WTC11 (cell line): ENCODE measurements at regions of chr9 and their contacts with region 1.

Region 1: DNA sequence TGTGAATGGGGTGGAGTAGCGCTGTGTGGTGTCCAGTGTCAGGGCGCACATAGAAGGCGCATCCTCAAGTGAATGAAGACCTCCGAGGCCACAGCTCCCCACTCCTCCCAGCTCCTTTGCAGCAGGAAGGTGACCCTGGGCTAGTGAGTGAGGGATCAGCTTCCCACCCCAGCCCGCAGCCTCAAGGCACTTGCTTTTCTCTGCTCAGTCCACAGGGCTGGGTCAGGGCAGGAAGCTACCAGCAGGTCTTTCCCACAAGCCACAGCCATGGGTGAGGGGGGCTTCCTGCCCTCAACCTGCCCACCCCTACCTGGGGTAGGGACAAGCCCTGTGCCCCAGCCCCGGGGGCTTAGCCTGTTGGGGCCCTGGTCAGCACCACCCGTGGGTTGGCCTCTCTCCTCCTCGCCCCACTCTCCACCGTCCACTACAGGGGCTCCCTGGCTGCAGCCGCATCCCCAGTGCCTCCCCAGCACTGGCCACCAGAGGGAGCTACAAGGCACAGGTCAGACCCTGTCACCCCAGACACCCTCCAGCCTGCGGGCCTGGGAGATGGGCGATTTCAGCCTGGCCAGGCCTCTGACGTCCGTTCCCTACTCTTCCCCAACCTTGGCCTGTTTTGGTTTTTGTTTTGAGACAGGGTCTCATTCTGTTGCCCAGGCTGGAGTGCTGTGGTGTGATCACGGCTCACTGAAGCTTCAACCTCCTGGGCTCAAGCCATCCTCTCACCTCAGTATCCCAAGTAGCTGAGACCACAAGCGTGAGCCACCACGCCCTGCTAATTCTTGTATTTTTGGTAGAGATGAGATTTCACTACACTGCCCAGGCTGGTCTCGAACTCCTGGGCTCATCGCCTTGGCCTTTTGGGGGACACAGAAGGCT is 1.3 kb upstream of the ABCA2 start:
- DNase-seq: peak; percentile 95
- ATAC-seq: peak; percentile 74
- H3K4me3 Mint-ChIP-seq: peak overlapping the region; percentile 58
- H3K27ac Mint-ChIP-seq: no peak overlapping the region; the same call in 1 of the 2 replicates
- H3K4me1 Mint-ChIP-seq: 0 out of 2 replicates have a peak, but pooled peaks cover 2% of the 10 kb centered on the region
- H3K27me3 Mint-ChIP-seq: peaks cover 17% of the 10 kb centered on the region
- CTCF ChIP-seq: peak; percentile 84

Region 2: GRCh38 chr9:136790927-136791641 is 238.2 kb before region 1 on chr9 and contains the start of gene TMEM141:
- CTCF ChIA-PET with region 1: interaction called, 14 read pairs
- POLR2A ChIA-PET with region 1: no interaction called
- DNase-seq: peak; percentile 100
- ATAC-seq: peak; percentile 92
- H3K4me3 Mint-ChIP-seq: peak within 1 kb of the TSS; percentile 78
- H3K27ac Mint-ChIP-seq: peak within 1 kb of the TSS; percentile 88
- H3K4me1 Mint-ChIP-seq: peaks cover 20% of the 10 kb centered on the region
- H3K27me3 Mint-ChIP-seq: peaks cover 5% of the 10 kb centered on the region
- CTCF ChIP-seq: no peak
- total RNA-seq, gene TMEM141: 72.0 to 86.7 TPM (median 86.1 TPM) in 3 replicates

Region 3: GRCh38 chr9:136965771-136966484 is 63.4 kb before region 1 on chr9:
- CTCF ChIA-PET with region 1: interaction called, 19 read pairs
- POLR2A ChIA-PET with region 1: no interaction called
- DNase-seq: no peak
- ATAC-seq: no peak
- H3K4me3 Mint-ChIP-seq: no peak overlapping the region
- H3K27ac Mint-ChIP-seq: peak overlapping the region; percentile 66; the same call in 1 of the 2 replicates
- H3K4me1 Mint-ChIP-seq: peaks cover 10% of the 10 kb centered on the region
- H3K27me3 Mint-ChIP-seq: no peaks in the 10 kb centered on the region
- CTCF ChIP-seq: no peak

Region 4: DNA sequence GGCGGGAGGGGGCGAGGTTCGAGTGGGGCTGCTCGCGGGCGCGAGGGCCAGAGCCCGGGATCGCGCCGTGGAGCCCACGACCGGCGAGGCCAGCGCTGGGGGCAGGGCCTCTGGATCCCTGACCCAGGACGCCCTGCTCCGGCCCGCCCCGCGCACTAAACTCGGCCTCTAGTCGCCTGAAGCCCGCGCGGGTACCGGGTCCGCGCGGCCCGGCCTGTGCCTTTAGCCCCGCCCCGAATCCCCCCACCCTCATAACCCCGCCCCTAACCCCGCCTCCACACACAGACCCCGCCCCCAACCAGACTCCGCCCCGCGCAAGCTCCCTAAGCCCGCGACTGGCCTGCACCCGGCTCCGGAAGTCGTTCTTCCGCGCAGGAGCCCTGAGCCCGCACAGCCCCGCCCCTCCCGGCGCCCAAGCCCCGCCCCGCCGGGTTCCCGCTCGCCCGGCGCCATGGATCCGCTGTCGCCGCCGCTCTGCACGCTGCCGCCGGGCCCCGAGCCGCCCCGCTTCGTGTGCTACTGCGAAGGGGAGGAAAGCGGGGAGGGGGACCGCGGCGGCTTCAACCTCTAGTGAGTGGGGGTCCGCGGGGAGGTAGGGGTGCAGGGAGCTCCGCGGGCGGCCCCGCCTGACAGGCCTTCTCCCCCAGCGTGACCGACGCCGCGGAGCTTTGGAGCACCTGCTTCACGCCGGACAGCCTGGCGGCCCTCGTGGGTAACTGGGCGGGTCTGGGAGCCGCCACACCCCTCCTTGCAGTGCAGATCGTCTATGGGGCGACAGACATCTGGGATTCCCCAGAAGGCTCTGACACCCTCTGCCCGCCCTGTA is 37.1 kb before region 1 on chr9 and contains the start of gene PAXX:
- CTCF ChIA-PET with region 1: interaction called, 53 read pairs
- POLR2A ChIA-PET with region 1: no interaction called
- DNase-seq: peak; percentile 93
- ATAC-seq: peak; percentile 90
- H3K4me3 Mint-ChIP-seq: peak within 1 kb of the TSS; percentile 72
- H3K27ac Mint-ChIP-seq: no peak within 1 kb of the TSS
- H3K4me1 Mint-ChIP-seq: no peaks in the 10 kb centered on the region; the same call in 1 of the 2 replicates
- H3K27me3 Mint-ChIP-seq: peaks cover 34% of the 10 kb centered on the region
- CTCF ChIP-seq: no peak
- total RNA-seq, gene PAXX: 44.1 to 45.3 TPM (median 44.6 TPM) in 3 replicates

Region 5: GRCh38 chr9:137041124-137041523 is 11.8 kb after region 1 on chr9:
- CTCF ChIA-PET with region 1: interaction called, 63 read pairs
- POLR2A ChIA-PET with region 1: no interaction called
- DNase-seq: no peak
- ATAC-seq: no peak
- H3K4me3 Mint-ChIP-seq: no peak overlapping the region
- H3K27ac Mint-ChIP-seq: no peak overlapping the region
- H3K4me1 Mint-ChIP-seq: peaks cover 6% of the 10 kb centered on the region
- H3K27me3 Mint-ChIP-seq: peaks cover 9% of the 10 kb centered on the region
- CTCF ChIP-seq: no peak

Region 6: DNA sequence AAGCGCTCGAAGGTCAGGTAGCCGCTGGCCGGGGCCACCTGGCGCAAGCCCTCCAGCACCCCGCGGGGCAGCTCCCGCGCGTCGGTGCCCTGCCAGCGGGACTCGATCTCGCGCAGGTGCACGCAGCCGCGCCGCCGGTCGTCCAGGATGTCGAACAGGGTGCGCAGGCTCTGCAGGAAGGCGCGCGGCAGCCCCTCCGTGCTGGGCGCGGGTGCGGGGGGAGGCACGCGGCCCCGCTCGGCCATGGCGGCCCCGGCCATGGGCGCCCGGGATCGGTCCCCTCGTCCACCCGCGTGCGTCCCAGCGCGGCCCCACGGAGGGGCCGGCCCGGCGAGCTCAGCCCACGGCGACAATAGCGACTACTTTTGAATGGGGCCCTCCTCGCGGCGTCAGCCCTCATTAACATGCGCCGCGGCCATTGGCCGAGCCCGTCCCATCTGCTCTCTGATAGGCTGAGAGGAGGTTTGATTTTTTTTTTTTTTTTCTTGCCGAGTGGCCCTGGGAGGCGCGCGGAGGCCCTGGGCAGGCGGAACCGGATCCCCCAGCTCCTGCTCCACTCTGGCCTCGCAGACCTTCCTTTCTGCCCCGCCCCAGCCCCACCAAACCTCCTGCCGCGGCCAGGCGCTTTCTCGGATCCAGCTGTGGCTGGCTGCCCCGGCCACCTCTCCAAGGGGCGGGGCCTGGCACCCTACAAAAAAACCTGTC is 41.1 kb after region 1 on chr9 and contains the start of gene SAPCD2:
- CTCF ChIA-PET with region 1: interaction called, 91 read pairs
- POLR2A ChIA-PET with region 1: interaction called, 3 read pairs
- DNase-seq: peak; percentile 88
- ATAC-seq: peak; percentile 84
- H3K4me3 Mint-ChIP-seq: peak within 1 kb of the TSS; percentile 71
- H3K27ac Mint-ChIP-seq: peak within 1 kb of the TSS; percentile 95
- H3K4me1 Mint-ChIP-seq: peaks cover 34% of the 10 kb centered on the region
- H3K27me3 Mint-ChIP-seq: no peaks in the 10 kb centered on the region
- CTCF ChIP-seq: no peak
- total RNA-seq, gene SAPCD2: 52.0 to 67.0 TPM (median 53.6 TPM) in 3 replicates

Region 7: DNA sequence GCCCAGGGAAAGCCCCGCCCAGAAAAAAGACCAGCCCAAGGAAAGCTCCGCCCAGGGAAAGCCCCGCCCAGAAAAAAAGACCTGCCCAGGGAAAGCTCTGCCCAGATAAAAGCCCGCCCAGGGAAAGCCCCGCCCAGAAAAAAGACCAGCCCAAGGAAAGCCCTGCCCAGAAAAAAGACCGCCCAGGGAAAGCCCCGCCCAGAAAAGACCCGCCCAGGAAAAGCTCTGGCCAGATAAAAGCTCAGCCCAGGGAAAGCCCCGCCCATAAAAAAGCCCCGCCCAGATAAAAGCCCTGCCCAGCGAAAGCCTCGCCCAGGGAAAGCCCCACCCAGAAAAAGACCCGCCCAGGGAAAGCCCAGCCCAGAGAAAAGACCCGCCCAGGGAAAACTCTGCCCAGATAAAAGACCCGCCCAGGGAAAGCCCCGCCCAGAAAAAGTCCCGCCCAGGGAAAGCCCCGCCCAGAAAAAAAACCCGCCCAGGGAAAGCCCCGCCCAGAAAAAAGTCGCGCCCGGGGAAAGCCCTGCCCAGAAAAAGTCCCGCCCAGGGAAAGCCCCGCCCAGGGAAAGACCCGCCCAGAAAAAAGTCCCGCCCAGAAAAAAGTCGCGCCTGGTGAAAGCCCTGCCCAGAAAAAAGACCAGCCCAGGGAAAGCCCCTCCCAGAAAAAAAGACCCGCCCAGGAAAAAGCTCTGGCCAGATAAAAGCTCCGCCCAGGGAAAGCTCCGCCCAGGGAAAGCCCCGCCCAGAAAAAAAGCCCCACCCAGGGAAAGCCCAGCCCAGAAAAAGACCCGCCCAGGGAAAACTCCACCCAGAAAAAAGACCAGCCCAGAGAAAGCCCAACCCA is 121.5 kb after region 1 on chr9:
- CTCF ChIA-PET with region 1: interaction called, 11 read pairs
- POLR2A ChIA-PET with region 1: no interaction called
- DNase-seq: peak; percentile 80
- ATAC-seq: peak; percentile 54
- H3K4me3 Mint-ChIP-seq: no peak overlapping the region
- H3K27ac Mint-ChIP-seq: no peak overlapping the region
- H3K4me1 Mint-ChIP-seq: no peaks in the 10 kb centered on the region; the same call in 1 of the 2 replicates
- H3K27me3 Mint-ChIP-seq: peaks cover 17% of the 10 kb centered on the region
- CTCF ChIP-seq: no peak